Naive thymus-derived CD4-positive, alpha-beta T cell (primary cell): ENCODE measurements at regions of chr10 and their contacts with region 1.

Region 1: DNA sequence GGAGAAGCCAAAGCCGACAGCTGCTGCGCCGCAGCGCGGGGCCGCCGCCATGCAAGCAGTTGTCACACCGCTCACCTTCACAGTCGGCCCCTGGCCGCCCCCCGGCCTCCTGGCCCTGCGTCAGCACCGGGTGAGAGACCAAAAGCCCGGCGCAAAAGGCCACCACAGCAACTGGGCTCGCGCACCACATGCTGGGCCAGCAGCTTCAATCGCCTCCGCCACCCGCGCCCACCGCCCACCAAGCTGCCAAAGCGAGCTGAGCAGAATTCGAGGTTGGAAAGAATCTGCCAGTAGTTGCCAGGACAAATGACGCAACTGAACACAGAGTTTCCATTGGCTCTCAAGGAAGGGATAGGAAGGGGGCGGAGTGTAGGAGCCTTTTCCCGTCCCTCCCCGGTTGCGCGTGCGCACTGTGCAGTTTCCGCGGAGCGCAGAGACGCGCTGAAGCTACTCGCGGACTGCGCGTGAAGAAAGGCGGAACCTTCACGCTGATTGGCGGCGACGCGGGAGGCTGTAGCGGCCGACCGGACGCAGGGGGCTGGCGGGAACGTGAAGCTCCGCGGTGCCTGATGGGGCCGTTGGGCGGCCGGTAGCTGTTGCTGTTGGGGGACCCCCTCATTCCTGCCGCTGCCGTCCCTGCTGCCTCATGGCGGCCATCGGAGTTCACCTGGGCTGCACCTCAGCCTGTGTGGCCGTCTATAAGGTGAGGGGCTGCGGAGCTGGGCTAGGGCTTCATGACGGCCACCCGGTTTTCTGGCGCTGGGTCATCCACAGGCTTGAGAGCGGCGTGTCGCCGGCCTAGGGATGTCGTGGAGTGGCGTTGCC is at the starts of genes CDNF, HSPA14 and MSANTD7:
- DNase-seq: peak; percentile 98 to 99 (median 99)
- ATAC-seq: peak; percentile 98
- H3K4me3 ChIP-seq: peak within 1 kb of the TSS; percentile 88
- H3K4me3 Mint-ChIP-seq: peak within 1 kb of the TSS; percentile 87 to 98 (median 97)
- H3K27ac ChIP-seq: peak within 1 kb of the TSS; percentile 94
- H3K27ac Mint-ChIP-seq: peak within 1 kb of the TSS; percentile 92 to 99 (median 97)
- H3K4me1 ChIP-seq: peaks cover 15 to 17% of the 10 kb centered on the region in 2 donors
- H3K4me1 Mint-ChIP-seq: peaks cover 14 to 45% (median 32%) of the 10 kb centered on the region in 7 donors
- H3K27me3 ChIP-seq: no peaks in the 10 kb centered on the region
- H3K27me3 Mint-ChIP-seq: no peaks in the 10 kb centered on the region
- total RNA-seq, gene CDNF: 1.0 to 8.4 (median 4.9) TPM
- total RNA-seq, gene HSPA14: 14.1 to 23.8 (median 17.6) TPM
- total RNA-seq, gene MSANTD7: 16.2 to 31.4 (median 21.9) TPM

Region 2: GRCh38 chr10:13299437-13300287 is 1538.3 kb before region 1 on chr10 and contains the start of gene PHYH:
- CTCF ChIA-PET with region 1: no interaction called
- POLR2A ChIA-PET with region 1: no interaction called
- intact Hi-C with region 1: loop called in 1 of 2 experiments (anchors 2 kb)
- DNase-seq: peak; percentile 70 to 88 (median 78)
- ATAC-seq: peak; percentile 77
- H3K4me3 ChIP-seq: peak within 1 kb of the TSS; percentile 69
- H3K4me3 Mint-ChIP-seq: peak within 1 kb of the TSS; percentile 70 to 96 (median 86)
- H3K27ac ChIP-seq: peak within 1 kb of the TSS; percentile 95
- H3K27ac Mint-ChIP-seq: peak within 1 kb of the TSS; percentile 92 to 99 (median 97)
- H3K4me1 ChIP-seq: peaks cover 16 to 19% of the 10 kb centered on the region in 2 donors
- H3K4me1 Mint-ChIP-seq: peaks cover 13 to 34% (median 22%) of the 10 kb centered on the region in 7 donors
- H3K27me3 ChIP-seq: no peaks in the 10 kb centered on the region
- H3K27me3 Mint-ChIP-seq: no peaks in the 10 kb centered on the region
- total RNA-seq, gene PHYH: 11.2 to 17.7 (median 13.2) TPM

Region 3: GRCh38 chr10:14500172-14500765 is 337.7 kb before region 1 on chr10:
- CTCF ChIA-PET with region 1: interaction called, 4 read pairs
- POLR2A ChIA-PET with region 1: no interaction called
- intact Hi-C with region 1: loop called (anchors 1 to 2 kb)
- DNase-seq: no peak
- ATAC-seq: no peak
- H3K4me3 ChIP-seq: no peak overlapping the region
- H3K4me3 Mint-ChIP-seq: no peak overlapping the region
- H3K27ac ChIP-seq: no peak overlapping the region
- H3K27ac Mint-ChIP-seq: peak overlapping the region in 4 of 9 donors; percentile 28 to 56 (median 40)
- H3K4me1 ChIP-seq: no peaks in the 10 kb centered on the region
- H3K4me1 Mint-ChIP-seq: peaks cover 4 to 15% (median 6%) of the 10 kb centered on the region in 7 donors
- H3K27me3 ChIP-seq: no peaks in the 10 kb centered on the region
- H3K27me3 Mint-ChIP-seq: peaks cover 0 to 12% (median 0%) of the 10 kb centered on the region in 5 donors

Region 4: GRCh38 chr10:14556285-14556956 is 281.5 kb before region 1 on chr10:
- CTCF ChIA-PET with region 1: interaction called, 6 read pairs
- POLR2A ChIA-PET with region 1: interaction called, 6 read pairs
- intact Hi-C with region 1: loop called in 1 of 2 experiments (anchors 1 kb)
- DNase-seq: no peak
- ATAC-seq: peak; percentile 47
- H3K4me3 ChIP-seq: no peak overlapping the region
- H3K4me3 Mint-ChIP-seq: peak overlapping the region; percentile 9 to 86 (median 73)
- H3K27ac ChIP-seq: peak overlapping the region; percentile 37
- H3K27ac Mint-ChIP-seq: peak overlapping the region; percentile 52 to 97 (median 93)
- H3K4me1 ChIP-seq: peaks cover 90 to 94% of the 10 kb centered on the region in 2 donors
- H3K4me1 Mint-ChIP-seq: peaks cover 84 to 100% (median 92%) of the 10 kb centered on the region in 7 donors
- H3K27me3 ChIP-seq: no peaks in the 10 kb centered on the region
- H3K27me3 Mint-ChIP-seq: no peaks in the 10 kb centered on the region

Region 5: DNA sequence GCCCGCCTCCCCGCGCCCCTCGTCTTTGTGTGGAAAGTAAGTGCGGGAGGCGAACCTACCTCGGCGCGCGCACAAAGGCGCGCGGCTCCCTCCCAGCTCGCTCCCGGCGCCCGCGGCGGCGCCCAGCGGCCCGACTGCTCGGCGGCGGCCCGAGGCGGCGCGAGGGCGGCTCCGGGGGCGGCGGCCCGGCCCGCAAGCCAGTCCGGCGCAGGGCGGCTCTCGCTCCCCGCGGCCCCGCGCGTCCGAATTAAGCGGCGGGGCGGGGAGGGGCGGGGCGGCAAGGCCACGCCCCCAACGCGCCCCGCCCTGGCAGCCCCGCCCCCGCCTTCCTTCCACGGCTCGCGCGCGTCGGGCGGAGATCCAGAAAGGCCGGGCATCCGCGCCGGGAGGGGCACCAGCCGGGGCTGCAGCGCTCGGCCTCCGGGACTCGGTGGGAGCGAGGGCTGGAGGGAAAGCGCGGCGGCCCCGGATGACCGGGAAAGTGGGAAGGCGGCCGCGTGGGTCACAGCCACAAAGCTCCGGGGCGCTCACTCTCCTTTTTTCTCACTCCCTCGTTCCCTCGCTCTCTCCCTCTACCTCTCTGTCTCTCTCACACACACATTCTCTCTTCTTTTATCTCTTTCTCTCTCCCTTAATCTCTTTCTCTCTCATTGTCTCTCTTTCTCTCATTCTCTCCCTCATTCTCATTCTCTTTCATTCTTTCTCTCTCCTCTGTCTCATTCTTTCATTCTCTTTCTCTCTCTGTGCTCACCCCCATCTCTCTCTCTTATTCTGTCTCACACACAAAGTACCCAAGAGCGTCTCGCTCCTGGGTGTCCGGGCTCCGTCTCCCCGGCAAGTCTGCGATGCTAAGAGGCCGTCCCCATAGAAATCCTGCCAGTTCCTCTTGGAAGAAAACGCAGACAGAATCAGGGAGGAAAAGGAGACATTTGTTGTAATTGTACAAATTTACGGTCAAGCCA is 233.5 kb before region 1 on chr10:
- CTCF ChIA-PET with region 1: no interaction called
- POLR2A ChIA-PET with region 1: no interaction called
- intact Hi-C with region 1: loop called (anchors 1 kb)
- DNase-seq: peak; percentile 56 to 82 (median 65)
- ATAC-seq: peak; percentile 90
- H3K4me3 ChIP-seq: peak overlapping the region; percentile 40
- H3K4me3 Mint-ChIP-seq: peak overlapping the region; percentile 86 to 99 (median 97)
- H3K27ac ChIP-seq: peak overlapping the region; percentile 73
- H3K27ac Mint-ChIP-seq: peak overlapping the region; percentile 57 to 99 (median 94)
- H3K4me1 ChIP-seq: peaks cover 29 to 31% of the 10 kb centered on the region in 2 donors
- H3K4me1 Mint-ChIP-seq: peaks cover 45 to 62% (median 57%) of the 10 kb centered on the region in 7 donors
- H3K27me3 ChIP-seq: no peaks in the 10 kb centered on the region
- H3K27me3 Mint-ChIP-seq: peaks cover 0 to 2% (median 0%) of the 10 kb centered on the region in 5 donors

Region 6: DNA sequence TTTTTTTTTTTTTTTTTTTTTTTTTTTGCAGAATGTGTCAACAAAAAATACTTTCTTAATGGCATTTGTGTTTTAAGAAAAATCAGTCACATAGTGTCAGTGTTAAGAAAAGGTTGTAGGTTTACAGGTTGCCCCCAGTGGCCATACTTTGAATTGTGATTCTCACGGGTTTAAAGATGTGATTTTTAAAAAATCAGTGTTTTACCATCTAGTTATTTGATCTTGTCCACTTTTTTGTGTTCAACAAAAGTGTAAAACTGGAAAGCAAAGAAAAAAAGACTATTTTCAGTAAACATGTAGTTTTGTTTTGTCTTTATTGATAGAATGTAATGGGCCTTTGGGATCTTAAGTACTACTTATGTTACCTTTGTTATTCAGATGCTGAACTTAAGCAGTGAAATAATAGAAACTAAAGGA is 66.4 kb after region 1 on chr10:
- CTCF ChIA-PET with region 1: no interaction called
- POLR2A ChIA-PET with region 1: no interaction called
- intact Hi-C with region 1: loop called in 1 of 2 experiments (anchors 2 kb)
- DNase-seq: peak in 7 of 9 donors; percentile 11 to 57 (median 41)
- ATAC-seq: peak; percentile 81
- H3K4me3 ChIP-seq: no peak overlapping the region
- H3K4me3 Mint-ChIP-seq: no peak overlapping the region
- H3K27ac ChIP-seq: no peak overlapping the region
- H3K27ac Mint-ChIP-seq: peak overlapping the region in 3 of 9 donors; percentile 48 to 73 (median 62)
- H3K4me1 ChIP-seq: peaks cover 0 to 4% of the 10 kb centered on the region in 2 donors
- H3K4me1 Mint-ChIP-seq: peaks cover 0 to 22% (median 11%) of the 10 kb centered on the region in 7 donors
- H3K27me3 ChIP-seq: no peaks in the 10 kb centered on the region
- H3K27me3 Mint-ChIP-seq: no peaks in the 10 kb centered on the region

Region 7: GRCh38 chr10:15097011-15097812 is 259.2 kb after region 1 on chr10 and contains the start of gene RPP38:
- CTCF ChIA-PET with region 1: no interaction called
- POLR2A ChIA-PET with region 1: interaction called, 4 read pairs
- intact Hi-C with region 1: loop called (anchors 1 to 5 kb)
- DNase-seq: peak; percentile 88 to 98 (median 95)
- ATAC-seq: peak; percentile 85
- H3K4me3 ChIP-seq: peak within 1 kb of the TSS; percentile 80
- H3K4me3 Mint-ChIP-seq: peak within 1 kb of the TSS; percentile 91 to 100 (median 98)
- H3K27ac ChIP-seq: peak within 1 kb of the TSS; percentile 94
- H3K27ac Mint-ChIP-seq: peak within 1 kb of the TSS; percentile 94 to 100 (median 98)
- H3K4me1 ChIP-seq: peaks cover 16 to 22% of the 10 kb centered on the region in 2 donors
- H3K4me1 Mint-ChIP-seq: peaks cover 22 to 50% (median 40%) of the 10 kb centered on the region in 7 donors
- H3K27me3 ChIP-seq: no peaks in the 10 kb centered on the region
- H3K27me3 Mint-ChIP-seq: peaks cover 0 to 3% (median 0%) of the 10 kb centered on the region in 5 donors
- total RNA-seq, gene RPP38: 7.6 to 22.4 (median 16.0) TPM

Region 8: GRCh38 chr10:16673443-16673842 is 1835.5 kb after region 1 on chr10:
- CTCF ChIA-PET with region 1: no interaction called
- POLR2A ChIA-PET with region 1: no interaction called
- intact Hi-C with region 1: no loop called
- DNase-seq: no peak
- ATAC-seq: no peak
- H3K4me3 ChIP-seq: no peak overlapping the region
- H3K4me3 Mint-ChIP-seq: no peak overlapping the region
- H3K27ac ChIP-seq: no peak overlapping the region
- H3K27ac Mint-ChIP-seq: no peak overlapping the region
- H3K4me1 ChIP-seq: no peaks in the 10 kb centered on the region
- H3K4me1 Mint-ChIP-seq: peaks cover 0 to 5% (median 0%) of the 10 kb centered on the region in 7 donors
- H3K27me3 ChIP-seq: no peaks in the 10 kb centered on the region
- H3K27me3 Mint-ChIP-seq: no peaks in the 10 kb centered on the region